ENCODE measurements at regions of chr1 and their contacts with region 1.

Region 1: DNA sequence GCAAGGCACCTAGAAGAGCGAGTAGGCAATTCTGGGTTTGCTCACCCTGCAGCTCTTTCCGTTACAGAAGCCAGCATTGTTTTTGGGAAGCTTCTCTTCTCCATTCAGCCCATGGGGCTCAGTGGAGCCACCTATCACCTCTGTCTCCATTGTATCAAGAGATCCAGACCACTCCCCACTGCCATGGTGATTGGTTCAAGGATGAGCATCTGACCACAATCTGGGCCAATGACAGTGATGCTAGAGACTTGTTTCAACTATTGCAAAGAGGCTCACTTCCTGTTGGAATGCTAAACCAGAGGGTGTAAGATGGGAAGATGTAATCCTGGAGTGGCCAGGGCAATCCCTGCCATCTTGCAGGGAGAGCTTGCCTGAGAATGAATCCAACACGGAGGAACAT is 6.6 kb downstream of the SPATA21 start:
- DNase-seq: no peak
- ATAC-seq: no peak
- H3K4me3 ChIP-seq: no peak overlapping the region
- H3K27ac ChIP-seq: no peak overlapping the region
- H3K4me1 ChIP-seq: peaks cover 0 to 11% (median 0%) of the 10 kb centered on the region in 9 donors
- H3K27me3 ChIP-seq: no peaks in the 10 kb centered on the region
- CTCF ChIP-seq: no peak

Region 2: GRCh38 chr1:16175610-16176553 is 254.7 kb before region 1 on chr1:
- intact Hi-C with region 1: no loop called
- DNase-seq: peak; percentile 91 to 92
- ATAC-seq: peak; percentile 85 to 96 (median 92)
- H3K4me3 ChIP-seq: no peak overlapping the region
- H3K27ac ChIP-seq: peak overlapping the region; percentile 59 to 91 (median 84)
- H3K4me1 ChIP-seq: peaks cover 17 to 57% (median 40%) of the 10 kb centered on the region in 9 donors
- H3K27me3 ChIP-seq: no peaks in the 10 kb centered on the region
- CTCF ChIP-seq: no peak

Region 3: GRCh38 chr1:16386454-16387113 is 44.0 kb before region 1 on chr1:
- intact Hi-C with region 1: loop called in 1 of 10 experiments (anchors 10 kb)
- DNase-seq: no peak
- ATAC-seq: peak; percentile 41 to 70 (median 58)
- H3K4me3 ChIP-seq: no peak overlapping the region
- H3K27ac ChIP-seq: peak overlapping the region in 9 of 10 donors; percentile 10 to 78 (median 59)
- H3K4me1 ChIP-seq: peaks cover 19 to 74% (median 66%) of the 10 kb centered on the region in 9 donors
- H3K27me3 ChIP-seq: no peaks in the 10 kb centered on the region
- CTCF ChIP-seq: no peak

Region 4: DNA sequence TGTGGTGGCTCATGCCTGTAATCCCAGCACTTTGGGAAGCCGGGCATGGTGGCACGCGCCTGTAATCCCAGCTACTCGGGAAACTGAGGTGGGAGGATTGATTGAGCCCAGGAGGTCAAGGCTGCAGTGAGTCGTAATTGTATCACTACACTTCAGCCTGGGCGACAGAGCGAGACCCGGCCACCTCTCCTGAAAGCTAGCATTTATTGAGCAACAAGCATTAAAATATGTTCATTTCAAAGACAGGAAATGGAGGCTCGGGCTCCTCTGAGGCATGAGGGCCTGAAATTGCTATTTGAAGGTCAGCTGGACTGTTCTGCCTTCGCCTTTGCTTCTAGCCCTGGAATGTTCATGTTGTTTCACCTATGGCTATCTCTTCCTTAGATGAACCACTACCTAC is 27.9 kb before region 1 on chr1:
- intact Hi-C with region 1: no loop called
- DNase-seq: no peak
- ATAC-seq: no peak
- H3K4me3 ChIP-seq: no peak overlapping the region
- H3K27ac ChIP-seq: no peak overlapping the region
- H3K4me1 ChIP-seq: no peaks in the 10 kb centered on the region
- H3K27me3 ChIP-seq: no peaks in the 10 kb centered on the region
- CTCF ChIP-seq: no peak

Measured in heart right ventricle (tissue), 16 donors.